ENCODE measurements at regions of chr19 and their contacts with region 1.

Region 1: GRCh38 chr19:17703824-17704463 is 15.3 kb upstream of the MAP1S start:
- DNase-seq: peak; percentile 80
- H3K4me3 ChIP-seq: no peak overlapping the region
- H3K27ac ChIP-seq: no peak overlapping the region
- H3K4me1 ChIP-seq: no peaks in the 10 kb centered on the region; a peak in 1 of 4 replicates
- H3K27me3 ChIP-seq: no peaks in the 10 kb centered on the region
- CTCF ChIP-seq: peak; percentile 78
- EP300 ChIP-seq: no peak
- RAD21 ChIP-seq: peak; percentile 71

Region 2: DNA sequence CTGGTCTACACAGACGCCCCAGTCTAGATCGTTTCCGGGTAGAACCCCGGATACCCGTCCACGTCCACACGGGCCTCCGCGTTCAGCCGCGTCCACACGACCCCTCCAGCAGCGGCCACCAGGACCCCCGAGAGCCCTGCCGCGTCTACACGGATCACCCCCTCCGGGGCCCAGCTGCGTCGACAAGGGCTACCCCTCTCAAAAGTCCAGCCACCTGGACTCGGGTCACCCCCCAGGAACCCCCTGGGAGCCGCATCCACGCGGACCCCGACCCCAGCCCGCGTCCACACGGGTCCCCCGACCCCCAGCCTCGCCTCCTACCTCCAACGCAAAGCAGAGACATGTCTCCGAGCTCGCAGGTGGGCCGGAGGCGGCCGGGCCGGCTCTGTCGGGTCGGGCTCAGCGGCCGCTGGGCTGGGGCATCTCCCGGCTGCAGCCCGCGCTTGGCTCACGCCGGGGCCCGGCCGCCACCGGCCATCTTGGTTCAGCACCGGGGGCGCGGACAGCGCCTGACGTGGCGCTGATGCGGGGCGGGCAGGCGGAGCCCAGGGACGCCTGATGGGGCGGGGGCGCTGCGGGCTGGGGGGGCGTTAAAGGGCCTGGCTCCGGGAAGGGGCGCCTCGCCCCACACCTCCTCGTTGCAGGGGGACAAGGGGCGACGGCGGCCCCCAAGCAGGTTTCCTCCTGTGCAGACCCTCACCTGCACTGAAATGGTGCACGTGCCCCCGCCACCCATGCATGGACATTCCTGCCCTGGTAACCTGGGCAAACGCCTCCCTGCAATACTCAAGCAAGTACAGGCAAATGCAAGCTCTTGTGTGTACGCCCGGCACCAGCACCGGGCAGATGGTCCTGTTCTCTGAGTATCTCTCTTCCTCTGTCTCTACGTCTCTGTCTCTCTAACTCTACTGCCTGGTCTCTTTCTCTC is 15.8 kb before region 1 on chr19 and contains the start of gene UNC13A:
- CTCF ChIA-PET with region 1: interaction called, 20 read pairs
- POLR2A ChIA-PET with region 1: interaction called, 6 read pairs
- DNase-seq: peak; percentile 96
- H3K4me3 ChIP-seq: peak within 1 kb of the TSS; percentile 29 to 49; a peak in 3 of 4 replicates
- H3K27ac ChIP-seq: peak within 1 kb of the TSS in 1 of 2 experiments; percentile 54; a peak in 2 of 4 replicates
- H3K4me1 ChIP-seq: peaks cover 0 to 2% of the 10 kb centered on the region in 2 experiments; a peak in 1 of 4 replicates
- H3K27me3 ChIP-seq: peaks cover 12% of the 10 kb centered on the region; the same call in 1 of the 2 replicates
- CTCF ChIP-seq: no peak
- EP300 ChIP-seq: no peak
- RAD21 ChIP-seq: no peak
- polyA plus RNA-seq, gene UNC13A: 0.32 and 0.38 TPM in 2 replicates

Region 3: DNA sequence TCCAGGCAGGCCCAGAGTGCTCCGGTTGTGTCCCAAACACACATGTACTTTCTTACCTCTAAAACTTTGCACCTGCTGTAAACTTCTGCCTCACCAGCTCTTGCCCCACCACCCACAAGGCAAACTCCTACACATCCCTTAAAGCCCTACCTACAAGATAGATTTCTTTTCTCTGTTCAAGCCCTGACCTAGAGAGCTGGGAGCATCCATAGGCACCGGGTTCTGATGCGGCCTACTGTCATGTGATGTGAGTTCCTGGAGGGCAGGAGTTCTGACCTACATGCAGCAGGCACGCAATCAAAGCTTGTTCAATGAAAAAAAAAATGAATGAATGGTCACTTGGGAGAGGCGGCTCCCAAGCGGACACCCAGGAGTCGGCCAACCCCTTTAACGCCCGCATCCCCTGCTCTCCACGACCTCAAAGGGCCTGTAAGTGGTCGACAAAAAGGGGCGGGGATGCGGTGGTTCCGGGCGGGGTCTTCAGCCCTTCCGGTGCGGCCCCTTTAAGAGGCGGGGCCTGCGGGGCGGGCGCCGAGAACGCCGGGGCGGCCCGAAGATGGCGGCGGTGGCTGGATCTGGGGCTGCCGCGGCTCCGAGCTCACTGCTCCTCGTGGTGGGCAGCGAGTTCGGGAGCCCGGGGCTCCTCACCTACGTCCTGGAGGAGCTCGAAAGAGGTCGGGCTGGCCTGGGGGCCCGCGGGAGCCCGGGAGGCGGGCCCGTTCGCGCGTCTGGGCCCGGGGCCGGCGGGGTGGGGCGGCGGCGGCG is 15.2 kb after region 1 on chr19 and contains the start of gene MAP1S:
- CTCF ChIA-PET with region 1: interaction called, 30 read pairs
- POLR2A ChIA-PET with region 1: no interaction called
- DNase-seq: peak; percentile 98
- H3K4me3 ChIP-seq: peak within 1 kb of the TSS; percentile 74 to 82
- H3K27ac ChIP-seq: peak within 1 kb of the TSS in 1 of 2 experiments; percentile 54; a peak in 1 of 4 replicates
- H3K4me1 ChIP-seq: peaks cover 16 to 20% of the 10 kb centered on the region in 2 experiments; a peak in 2 of 4 replicates
- H3K27me3 ChIP-seq: no peaks in the 10 kb centered on the region
- CTCF ChIP-seq: no peak
- EP300 ChIP-seq: no peak
- RAD21 ChIP-seq: no peak
- polyA plus RNA-seq, gene MAP1S: 7.8 and 18.4 TPM in 2 replicates

Region 4: DNA sequence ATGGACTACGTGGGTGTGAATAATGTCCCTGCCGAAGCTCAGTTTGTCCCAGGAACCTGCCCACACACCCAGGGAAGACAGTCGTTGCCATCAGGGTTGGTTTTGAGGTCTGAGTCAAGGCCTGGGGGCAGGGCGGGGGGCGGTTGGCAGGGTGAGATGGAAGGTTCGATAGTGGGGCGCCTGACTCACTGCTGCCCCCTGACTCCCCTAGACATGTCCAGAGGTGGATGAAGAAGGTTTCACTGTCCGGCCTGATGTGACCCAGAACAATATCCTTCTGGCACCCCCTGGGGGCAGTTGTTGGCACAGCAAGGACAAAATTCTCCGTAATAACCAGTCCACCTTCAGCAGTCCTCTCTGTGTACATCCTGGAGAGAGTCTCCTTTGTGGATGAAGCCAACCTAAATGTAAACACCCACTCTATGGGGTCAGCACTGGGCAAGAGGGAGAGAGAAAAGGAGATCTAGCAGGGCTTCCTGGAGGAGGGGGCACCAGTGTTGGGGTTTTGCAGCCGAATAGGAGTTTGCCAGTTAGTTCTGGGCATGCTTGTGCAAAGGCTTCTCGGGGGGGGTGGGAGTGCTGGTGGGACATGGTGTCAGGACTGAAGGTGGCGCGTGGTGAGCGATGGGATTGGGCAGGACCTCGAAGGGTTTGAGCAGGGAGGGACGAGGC is 71.4 kb after region 1 on chr19:
- CTCF ChIA-PET with region 1: interaction called, 13 read pairs
- POLR2A ChIA-PET with region 1: no interaction called
- DNase-seq: peak; percentile 76
- H3K4me3 ChIP-seq: no peak overlapping the region; a peak in 1 of 4 replicates
- H3K27ac ChIP-seq: no peak overlapping the region
- H3K4me1 ChIP-seq: no peaks in the 10 kb centered on the region
- H3K27me3 ChIP-seq: no peaks in the 10 kb centered on the region
- CTCF ChIP-seq: peak; percentile 76
- EP300 ChIP-seq: no peak
- RAD21 ChIP-seq: peak; percentile 75

Region 5: GRCh38 chr19:17784201-17785008 is 80.5 kb after region 1 on chr19:
- CTCF ChIA-PET with region 1: interaction called, 32 read pairs
- POLR2A ChIA-PET with region 1: no interaction called
- DNase-seq: peak; percentile 93
- H3K4me3 ChIP-seq: no peak overlapping the region; a peak in 1 of 4 replicates
- H3K27ac ChIP-seq: no peak overlapping the region
- H3K4me1 ChIP-seq: peaks cover 0 to 3% of the 10 kb centered on the region in 2 experiments; a peak in 1 of 4 replicates
- H3K27me3 ChIP-seq: no peaks in the 10 kb centered on the region
- CTCF ChIP-seq: peak; percentile 83
- EP300 ChIP-seq: no peak
- RAD21 ChIP-seq: peak; percentile 85

Measured in SK-N-SH (cell line).